IMR-90 (cell line): ENCODE measurements at regions of chr5 and their contacts with region 1.

Region 1: GRCh38 chr5:141326088-141326854 is 4.0 kb upstream of the PCDHGA1 start:
- DNase-seq: peak; percentile 82
- ATAC-seq: peak; percentile 98
- H3K4me3 ChIP-seq: peak overlapping the region; percentile 85
- H3K27ac ChIP-seq: peak overlapping the region; percentile 96
- H3K4me1 ChIP-seq: no peaks in the 10 kb centered on the region
- H3K27me3 ChIP-seq: no peaks in the 10 kb centered on the region
- CTCF ChIP-seq: peak; percentile 81
- POLR2A ChIP-seq: peak; percentile 53; the same call in 1 of the 2 replicates
- RAD21 ChIP-seq: peak; percentile 64

Region 2: DNA sequence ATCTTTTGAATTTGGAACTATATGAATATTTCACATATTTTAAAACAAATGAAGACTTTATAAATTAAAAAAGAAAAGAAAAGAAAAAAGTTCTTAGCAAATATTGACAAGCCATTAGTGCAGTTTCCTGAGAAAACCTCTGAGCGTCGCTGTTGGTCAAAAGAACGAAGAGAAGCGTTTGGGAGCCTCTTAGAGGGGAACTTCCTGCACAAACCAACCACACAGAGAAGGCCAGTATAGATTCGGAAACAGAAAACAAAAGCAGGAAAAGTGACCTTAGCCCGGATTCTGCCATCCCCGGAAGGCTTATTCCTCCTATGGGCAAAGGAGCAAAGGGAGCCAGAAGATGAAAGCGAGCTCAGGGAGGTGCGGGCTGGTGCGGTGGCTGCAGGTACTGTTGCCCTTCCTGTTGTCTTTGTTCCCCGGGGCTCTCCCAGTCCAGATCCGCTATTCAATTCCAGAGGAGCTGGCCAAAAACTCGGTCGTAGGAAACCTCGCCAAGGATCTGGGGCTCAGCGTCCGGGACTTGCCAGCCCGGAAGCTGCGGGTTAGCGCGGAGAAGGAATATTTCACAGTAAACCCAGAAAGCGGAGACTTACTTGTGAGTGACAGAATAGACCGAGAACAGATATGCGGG is 33.6 kb after region 1 on chr5 and contains the start of gene PCDHGB2:
- CTCF ChIA-PET with region 1: interaction called, 3 read pairs
- POLR2A ChIA-PET with region 1: no interaction called
- dilution Hi-C with region 1: no loop called
- in situ Hi-C with region 1: no loop called
- intact Hi-C with region 1: loop called (anchors 5 kb)
- DNase-seq: peak; percentile 64
- ATAC-seq: peak; percentile 38
- H3K4me3 ChIP-seq: peak within 1 kb of the TSS; percentile 61
- H3K27ac ChIP-seq: 0 out of 2 replicates have a peak within 1 kb of the TSS, but pooled peaks have one; percentile 49
- H3K4me1 ChIP-seq: no peaks in the 10 kb centered on the region
- H3K27me3 ChIP-seq: peaks cover 2% of the 10 kb centered on the region; the same call in 1 of the 2 replicates
- CTCF ChIP-seq: peak; percentile 48
- POLR2A ChIP-seq: no peak
- RAD21 ChIP-seq: peak; percentile 45
- total RNA-seq, gene PCDHGB2: 2.8 and 3.0 TPM in 2 replicates

Region 3: DNA sequence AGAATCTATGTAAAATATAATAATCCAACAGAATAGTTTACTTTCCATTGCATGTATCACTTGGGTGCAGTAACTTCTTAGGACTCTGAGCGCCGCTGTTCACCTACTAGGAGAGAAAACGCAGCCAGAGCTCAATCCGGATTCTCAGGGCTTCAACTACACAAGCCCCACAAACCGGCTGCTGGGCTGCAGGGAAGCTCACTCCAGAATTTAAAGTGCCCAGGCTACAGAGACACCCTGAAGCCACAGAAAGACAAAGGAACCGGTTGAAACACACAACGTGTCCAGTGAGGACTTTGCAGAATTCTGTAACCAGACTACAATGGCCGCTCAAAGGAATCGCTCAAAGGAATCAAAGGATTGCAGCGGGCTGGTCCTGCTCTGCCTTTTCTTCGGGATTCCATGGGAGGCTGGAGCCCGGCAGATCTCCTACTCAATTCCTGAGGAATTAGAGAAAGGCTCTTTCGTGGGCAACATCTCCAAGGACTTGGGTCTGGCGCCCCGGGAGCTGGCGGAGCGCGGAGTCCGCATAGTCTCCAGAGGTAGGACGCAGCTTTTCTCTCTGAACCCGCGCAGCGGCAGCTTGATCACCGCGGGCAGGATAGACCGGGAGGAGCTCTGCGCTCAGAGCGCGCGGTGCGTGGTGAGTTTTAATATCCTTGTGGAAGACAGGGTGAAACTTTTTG is 86.7 kb after region 1 on chr5 and contains the start of gene PCDHGA10:
- CTCF ChIA-PET with region 1: interaction called, 3 read pairs
- POLR2A ChIA-PET with region 1: no interaction called
- dilution Hi-C with region 1: no loop called
- in situ Hi-C with region 1: no loop called
- intact Hi-C with region 1: loop called (anchors 5 kb)
- DNase-seq: peak; percentile 80
- ATAC-seq: peak; percentile 77
- H3K4me3 ChIP-seq: peak within 1 kb of the TSS; percentile 55
- H3K27ac ChIP-seq: peak within 1 kb of the TSS; percentile 65; the same call in 1 of the 2 replicates
- H3K4me1 ChIP-seq: no peaks in the 10 kb centered on the region
- H3K27me3 ChIP-seq: no peaks in the 10 kb centered on the region
- CTCF ChIP-seq: peak; percentile 70
- POLR2A ChIP-seq: no peak
- RAD21 ChIP-seq: peak; percentile 61
- total RNA-seq, gene PCDHGA10: 6.6 and 6.9 TPM in 2 replicates